Posterior vena cava (tissue), 2 donors: ENCODE measurements at regions of chr18 and their contacts with region 1.

Region 1: DNA sequence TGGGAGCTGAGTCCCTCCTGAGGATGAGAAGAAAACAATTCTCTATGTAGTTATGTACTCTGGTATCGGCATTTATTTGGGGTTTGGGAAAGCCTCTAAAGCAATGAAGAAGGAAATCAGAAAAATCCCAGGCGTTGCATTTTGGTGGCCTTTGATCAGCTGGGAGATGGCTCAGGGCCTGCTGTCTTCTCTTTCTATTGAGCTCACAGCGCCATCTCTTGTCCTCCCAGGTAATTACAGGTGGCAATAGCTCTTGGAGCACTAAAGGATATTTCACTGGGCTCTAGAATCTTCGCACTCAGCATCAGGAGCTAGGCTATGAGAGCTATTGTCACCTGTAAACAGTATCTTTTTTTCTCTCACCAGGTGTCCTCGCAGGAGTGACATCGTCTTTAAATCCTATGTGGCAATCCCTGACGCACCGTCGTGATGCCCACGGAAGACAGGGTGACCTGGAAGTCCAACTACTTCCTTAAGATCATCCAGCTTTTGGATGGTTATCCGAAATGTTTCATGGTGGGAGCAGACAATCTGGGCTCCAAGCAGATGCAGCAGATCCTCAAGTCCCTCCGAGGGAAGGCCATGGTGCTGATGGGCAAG is 76.1 kb upstream of the PMAIP1 start:
- DNase-seq: no peak

Region 2: DNA sequence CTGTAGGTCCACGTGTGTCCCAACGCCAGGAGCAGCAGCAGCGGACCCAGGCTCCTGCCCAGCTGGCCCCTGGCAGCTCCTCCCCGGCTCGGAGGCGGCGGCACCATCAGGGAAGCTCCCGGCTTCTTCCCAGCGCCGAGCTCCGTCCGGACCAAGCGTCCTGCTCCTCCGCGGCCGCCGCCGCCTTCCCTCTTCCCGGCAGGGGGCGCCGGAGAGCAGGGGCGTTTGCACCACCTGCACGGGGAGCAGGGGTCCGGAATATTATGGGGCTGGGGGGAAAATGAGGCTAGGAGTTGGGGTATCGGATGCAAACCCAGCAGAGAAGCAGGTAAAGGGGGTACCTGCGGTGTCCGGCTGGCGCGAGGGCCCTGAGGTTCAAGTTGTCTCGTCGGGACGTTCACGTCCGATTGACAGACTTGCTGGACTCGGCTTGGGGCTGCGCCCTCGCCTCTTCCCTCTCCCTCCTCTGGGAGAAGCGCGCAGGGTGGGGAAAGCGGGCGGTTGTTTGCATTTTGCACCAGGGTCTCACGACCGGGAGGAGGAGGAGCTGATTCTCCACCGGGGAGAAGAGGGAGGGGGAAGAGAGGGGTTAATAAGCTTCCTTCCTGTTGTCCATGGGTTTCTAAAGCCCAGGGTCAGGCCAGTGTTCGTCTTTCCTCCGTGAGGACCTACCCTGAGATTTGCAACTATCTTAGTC is 126.3 kb before region 1 on chr18 and contains the start of gene CCBE1:
- intact Hi-C with region 1: loop called in 1 of 2 experiments (anchors 10 kb)
- DNase-seq: peak; percentile 85
- total RNA-seq, gene CCBE1: 2.1 to 3.0 TPM

Region 3: GRCh38 chr18:59899298-59900221 is 75.9 kb after region 1 on chr18 and contains the start of gene PMAIP1:
- intact Hi-C with region 1: loop called in 1 of 2 experiments (anchors 2 kb)
- DNase-seq: peak; percentile 90
- total RNA-seq, gene PMAIP1: 0.38 TPM in 1 of 2 donors, not detected in the other